ENCODE measurements at regions of chr3 and their contacts with region 1.

Region 1: GRCh38 chr3:124887177-124887931 is at the start of gene ITGB5:
- DNase-seq: peak; percentile 90
- ATAC-seq: peak; percentile 93
- total RNA-seq, gene ITGB5: 109 TPM

Region 2: DNA sequence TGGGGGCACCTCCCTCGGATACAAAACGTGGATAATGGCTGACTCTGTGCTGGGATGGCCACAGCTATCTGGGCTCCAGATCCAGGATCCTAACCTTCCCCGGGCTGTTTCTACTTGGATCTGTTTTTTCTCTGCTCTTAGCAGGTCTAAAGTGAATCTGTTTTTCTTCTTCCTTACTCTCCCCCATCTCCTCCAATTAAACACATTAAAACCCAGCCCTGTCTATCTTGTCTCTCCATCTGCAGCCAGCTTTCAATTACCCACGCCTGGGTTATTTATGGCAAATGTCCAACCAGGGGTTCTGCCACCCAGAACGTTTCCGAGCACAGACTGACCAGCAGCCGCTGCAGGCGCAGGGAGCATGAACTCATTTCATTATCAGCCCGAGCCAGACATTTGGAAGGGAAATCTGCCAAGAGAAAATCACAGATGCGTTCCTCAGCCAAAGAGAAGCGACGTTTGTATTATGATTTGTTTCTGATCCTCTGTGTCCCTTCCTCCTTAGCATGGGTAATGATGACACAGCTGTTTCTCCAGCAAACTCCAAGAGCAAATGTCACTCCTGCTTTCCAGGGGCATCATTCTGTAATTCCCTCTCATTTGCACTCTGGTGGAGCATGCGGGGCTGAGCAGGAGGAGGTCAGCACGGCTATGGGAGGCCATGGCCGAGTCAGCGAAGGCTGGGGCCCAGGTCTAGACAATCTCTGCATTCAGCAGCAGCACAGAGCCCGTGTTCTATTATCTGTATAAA is 115.1 kb before region 1 on chr3:
- intact Hi-C with region 1: loop called (anchors 5 kb)
- DNase-seq: peak; percentile 65
- ATAC-seq: peak; percentile 60

Measured in left ventricle myocardium superior (tissue), 1 donor.